ENCODE measurements at regions of chr7 and their contacts with region 1.

Region 1: GRCh38 chr7:77270094-77270480 is 70.5 kb upstream of the FGL2 start:
- DNase-seq: no peak
- H3K4me3 ChIP-seq: no peak overlapping the region
- H3K27ac ChIP-seq: no peak overlapping the region
- H3K4me1 ChIP-seq: no peaks in the 10 kb centered on the region
- H3K27me3 ChIP-seq: no peaks in the 10 kb centered on the region
- CTCF ChIP-seq: no peak

Region 2: DNA sequence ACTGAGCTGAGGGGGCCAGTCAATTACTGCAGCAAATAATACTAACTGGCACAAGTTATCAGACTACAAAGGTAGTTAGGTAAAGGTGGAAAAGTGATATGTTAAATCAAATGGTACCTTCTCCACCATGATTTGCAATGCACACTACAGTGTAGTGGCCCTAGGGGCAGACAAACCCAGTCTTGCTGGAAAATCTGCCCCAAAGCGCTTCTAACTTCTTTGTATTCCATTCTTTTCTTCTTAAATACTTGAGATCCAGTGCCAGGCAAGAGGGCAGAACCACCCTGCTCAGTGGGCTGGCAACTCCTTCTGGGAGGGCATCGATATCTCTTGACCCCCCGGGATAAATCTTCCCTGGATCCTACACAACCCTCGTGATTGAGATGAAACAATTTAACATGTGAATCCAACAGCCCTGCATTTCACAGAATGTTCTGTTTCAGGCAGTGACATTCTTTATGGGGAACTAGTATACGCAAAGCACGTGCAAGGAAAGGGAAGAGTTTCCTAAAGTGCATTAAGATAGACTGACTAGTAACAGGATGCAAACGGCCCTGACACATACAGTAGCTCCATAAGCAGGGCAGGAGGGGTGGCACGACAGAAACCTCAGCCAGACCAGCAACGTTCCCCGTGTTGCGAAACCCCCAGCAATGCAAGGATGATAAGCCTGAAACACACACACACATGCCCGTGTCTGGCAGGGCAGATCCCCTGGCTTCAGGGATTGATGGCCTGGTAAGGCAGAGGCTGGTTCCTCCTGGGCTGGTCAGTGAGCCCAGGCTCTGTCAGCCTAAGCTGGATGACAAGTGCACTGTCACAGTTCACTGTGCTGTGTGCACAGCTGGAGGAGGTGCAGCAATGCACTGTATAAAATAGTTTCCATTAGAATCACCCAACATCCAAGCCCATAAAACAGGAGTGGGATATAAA is 56.9 kb after region 1 on chr7:
- CTCF ChIA-PET with region 1: no interaction called
- POLR2A ChIA-PET with region 1: interaction called, 15 read pairs
- intact Hi-C with region 1: no loop called
- DNase-seq: peak in 1 of 2 experiments; percentile 33
- H3K4me3 ChIP-seq: no peak overlapping the region
- H3K27ac ChIP-seq: peak overlapping the region; percentile 39; the same call in 1 of the 2 replicates
- H3K4me1 ChIP-seq: peaks cover 44% of the 10 kb centered on the region
- H3K27me3 ChIP-seq: no peaks in the 10 kb centered on the region
- CTCF ChIP-seq: no peak

Measured in PC-9 (cell line).